Gastrocnemius medialis (tissue), 4 donors: ENCODE measurements at regions of chr6 and their contacts with region 1.

Region 1: GRCh38 chr6:170279977-170280688 is 10.7 kb downstream of the DLL1 start:
- DNase-seq: peak; percentile 66 to 85
- ATAC-seq: peak; percentile 89 to 92
- H3K4me3 ChIP-seq: peak overlapping the region; percentile 33 to 58 (median 44)
- H3K27ac ChIP-seq: peak overlapping the region; percentile 86 to 90 (median 88)
- H3K4me1 ChIP-seq: peaks cover 22 to 26% of the 10 kb centered on the region in 2 donors
- H3K27me3 ChIP-seq: no peaks in the 10 kb centered on the region
- CTCF ChIP-seq: peak in 1 of 5 experiments; percentile 20
- POLR2A ChIP-seq: peak in 1 of 2 donors; percentile 22

Region 2: GRCh38 chr6:170178561-170179477 is 101.3 kb before region 1 on chr6:
- in situ Hi-C with region 1: no loop called
- intact Hi-C with region 1: loop called (anchors 5 kb)
- DNase-seq: peak; percentile 75 to 82
- ATAC-seq: peak; percentile 67 to 81
- H3K4me3 ChIP-seq: no peak overlapping the region
- H3K27ac ChIP-seq: peak overlapping the region; percentile 28 to 77 (median 60)
- H3K4me1 ChIP-seq: peaks cover 23 to 26% of the 10 kb centered on the region in 2 donors
- H3K27me3 ChIP-seq: no peaks in the 10 kb centered on the region
- CTCF ChIP-seq: no peak
- POLR2A ChIP-seq: no peak

Region 3: GRCh38 chr6:170243791-170244291 is 36.3 kb before region 1 on chr6:
- in situ Hi-C with region 1: no loop called
- intact Hi-C with region 1: no loop called
- DNase-seq: no peak
- ATAC-seq: peak in 1 of 2 donors; percentile 39
- H3K4me3 ChIP-seq: no peak overlapping the region
- H3K27ac ChIP-seq: no peak overlapping the region
- H3K4me1 ChIP-seq: peaks cover 3% of the 10 kb centered on the region in 2 donors
- H3K27me3 ChIP-seq: peaks cover 12 to 15% (median 13%) of the 10 kb centered on the region in 3 donors
- CTCF ChIP-seq: no peak
- POLR2A ChIP-seq: no peak

Region 4: GRCh38 chr6:170257376-170257775 is 22.8 kb before region 1 on chr6:
- in situ Hi-C with region 1: no loop called
- intact Hi-C with region 1: no loop called
- DNase-seq: no peak
- ATAC-seq: no peak
- H3K4me3 ChIP-seq: no peak overlapping the region
- H3K27ac ChIP-seq: no peak overlapping the region
- H3K4me1 ChIP-seq: no peaks in the 10 kb centered on the region
- H3K27me3 ChIP-seq: no peaks in the 10 kb centered on the region
- CTCF ChIP-seq: no peak
- POLR2A ChIP-seq: no peak

Region 5: GRCh38 chr6:170416303-170416702 is 136.2 kb after region 1 on chr6:
- in situ Hi-C with region 1: no loop called
- intact Hi-C with region 1: no loop called
- DNase-seq: no peak
- ATAC-seq: no peak
- H3K4me3 ChIP-seq: no peak overlapping the region
- H3K27ac ChIP-seq: no peak overlapping the region
- H3K4me1 ChIP-seq: no peaks in the 10 kb centered on the region
- H3K27me3 ChIP-seq: peaks cover 0 to 3% (median 0%) of the 10 kb centered on the region in 3 donors
- CTCF ChIP-seq: no peak
- POLR2A ChIP-seq: no peak

Region 6: DNA sequence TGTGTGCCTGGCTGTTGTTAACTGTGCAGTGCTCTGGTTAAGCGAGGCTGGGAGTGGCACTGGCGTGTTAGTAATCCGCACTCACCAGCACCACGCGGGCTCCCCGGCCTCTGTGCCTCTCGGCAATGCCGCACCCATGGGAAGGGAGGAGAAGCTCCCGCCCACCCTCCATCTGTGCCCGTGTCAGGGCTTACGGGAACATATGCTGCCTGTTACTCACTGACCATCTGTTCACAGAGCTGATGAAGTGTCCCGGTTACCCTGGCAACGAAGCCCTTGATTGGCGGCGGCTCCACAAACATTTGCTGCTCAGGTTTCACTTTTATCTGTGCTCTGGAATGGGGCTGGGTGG is 158.2 kb after region 1 on chr6:
- in situ Hi-C with region 1: no loop called
- intact Hi-C with region 1: loop called (anchors 5 kb)
- DNase-seq: peak; percentile 97 to 98
- ATAC-seq: peak; percentile 80 to 81
- H3K4me3 ChIP-seq: peak overlapping the region; percentile 23 to 38 (median 26)
- H3K27ac ChIP-seq: peak overlapping the region; percentile 84 to 97 (median 92)
- H3K4me1 ChIP-seq: peaks cover 34 to 58% of the 10 kb centered on the region in 2 donors
- H3K27me3 ChIP-seq: no peaks in the 10 kb centered on the region
- CTCF ChIP-seq: no peak
- POLR2A ChIP-seq: peak; percentile 70 to 71